ENCODE measurements at regions of chr1 and their contacts with region 1.

Region 1: DNA sequence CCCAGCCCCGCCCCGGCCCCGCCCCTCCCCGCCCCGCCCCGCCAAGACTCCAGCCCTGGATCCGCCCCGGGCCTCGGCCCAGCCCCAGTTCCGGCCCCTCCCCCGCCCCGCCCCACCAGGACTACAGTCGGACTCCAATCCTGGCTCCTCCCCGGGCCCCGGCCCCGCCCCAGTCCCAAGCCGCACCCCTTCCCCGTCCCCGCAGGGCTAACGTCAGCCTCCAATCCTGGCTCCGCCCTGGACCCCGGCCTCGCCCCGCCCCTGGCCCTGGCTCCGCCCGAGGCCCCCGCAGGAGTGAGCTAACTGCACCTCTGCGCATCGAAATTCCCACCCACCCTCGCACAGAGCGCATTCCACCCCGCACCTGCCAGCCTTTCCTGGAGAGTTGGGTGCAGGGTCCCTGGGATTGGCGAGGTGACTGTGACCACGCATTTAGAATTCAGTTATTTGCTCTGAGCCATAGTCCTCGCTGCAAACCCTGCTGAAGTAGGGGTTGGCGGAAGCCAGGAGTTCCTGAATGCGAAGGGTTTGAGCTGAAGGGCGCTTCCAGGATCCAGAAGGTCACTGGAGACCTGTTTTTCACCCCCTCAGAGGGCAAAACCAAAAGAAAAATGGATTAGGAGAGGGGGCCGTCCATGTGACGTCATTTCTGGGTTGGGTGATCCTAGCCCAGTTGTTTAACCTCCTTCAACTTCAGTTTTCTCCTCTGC is 588 bp upstream of the IGSF8 start:
- DNase-seq: peak; percentile 100
- CTCF ChIP-seq: no peak

Region 2: DNA sequence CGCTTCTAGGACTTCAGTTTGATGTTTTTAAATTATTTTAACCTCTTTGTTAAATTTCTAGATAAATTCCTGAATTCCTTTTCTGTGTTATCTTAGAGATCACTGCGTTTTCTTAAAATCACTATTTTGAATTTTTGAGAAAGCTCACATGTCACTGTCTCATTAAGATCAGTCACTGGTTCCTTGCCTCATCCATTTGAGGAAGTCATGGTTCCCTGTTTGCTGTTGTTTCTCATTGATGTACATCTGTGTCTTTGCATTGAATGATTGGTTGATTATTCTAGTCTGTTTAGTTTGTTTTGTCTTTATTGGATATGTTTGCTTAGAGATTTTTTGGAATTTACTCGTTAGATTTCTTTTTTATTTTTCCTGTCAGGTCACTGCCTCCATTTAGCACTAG is 434.8 kb before region 1 on chr1:
- CTCF ChIA-PET with region 1: no interaction called
- POLR2A ChIA-PET with region 1: no interaction called
- DNase-seq: no peak
- CTCF ChIP-seq: no peak

Region 3: DNA sequence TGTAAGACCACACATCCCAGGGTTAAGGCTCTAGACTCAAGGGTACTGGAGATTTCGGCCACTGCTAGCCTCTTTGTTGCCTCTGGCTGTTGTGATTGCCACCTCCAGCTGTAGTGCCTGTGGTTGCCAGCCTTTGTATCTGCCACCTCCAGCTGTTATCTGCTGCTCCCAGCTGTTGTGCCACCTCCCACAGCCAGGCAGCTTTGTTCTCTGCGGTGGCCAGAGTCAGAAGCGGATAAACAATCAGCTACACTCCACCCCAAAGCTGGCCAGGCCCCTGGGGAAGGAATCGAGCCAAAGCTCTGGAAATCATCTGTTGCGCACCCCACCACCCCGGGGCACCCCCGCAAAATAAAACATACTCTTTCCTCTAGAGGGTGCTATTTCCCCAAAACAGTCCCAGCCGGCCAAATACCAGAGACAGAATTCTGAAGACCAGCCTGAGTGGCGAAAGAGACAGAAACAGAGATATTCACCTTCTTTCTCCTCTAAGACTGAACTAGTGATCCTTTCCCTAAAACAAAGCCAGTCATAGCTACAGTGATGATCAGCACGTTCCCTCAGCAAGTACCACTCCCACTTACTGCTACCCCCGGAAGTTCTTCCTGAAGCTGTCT is 52.4 kb before region 1 on chr1:
- CTCF ChIA-PET with region 1: interaction called, 983 read pairs
- POLR2A ChIA-PET with region 1: no interaction called
- DNase-seq: peak; percentile 82
- CTCF ChIP-seq: peak; percentile 67

Region 4: GRCh38 chr1:160078512-160079195 is 20.4 kb before region 1 on chr1:
- CTCF ChIA-PET with region 1: interaction called, 983 read pairs
- POLR2A ChIA-PET with region 1: no interaction called
- DNase-seq: peak; percentile 71
- CTCF ChIP-seq: peak; percentile 77

Region 5: DNA sequence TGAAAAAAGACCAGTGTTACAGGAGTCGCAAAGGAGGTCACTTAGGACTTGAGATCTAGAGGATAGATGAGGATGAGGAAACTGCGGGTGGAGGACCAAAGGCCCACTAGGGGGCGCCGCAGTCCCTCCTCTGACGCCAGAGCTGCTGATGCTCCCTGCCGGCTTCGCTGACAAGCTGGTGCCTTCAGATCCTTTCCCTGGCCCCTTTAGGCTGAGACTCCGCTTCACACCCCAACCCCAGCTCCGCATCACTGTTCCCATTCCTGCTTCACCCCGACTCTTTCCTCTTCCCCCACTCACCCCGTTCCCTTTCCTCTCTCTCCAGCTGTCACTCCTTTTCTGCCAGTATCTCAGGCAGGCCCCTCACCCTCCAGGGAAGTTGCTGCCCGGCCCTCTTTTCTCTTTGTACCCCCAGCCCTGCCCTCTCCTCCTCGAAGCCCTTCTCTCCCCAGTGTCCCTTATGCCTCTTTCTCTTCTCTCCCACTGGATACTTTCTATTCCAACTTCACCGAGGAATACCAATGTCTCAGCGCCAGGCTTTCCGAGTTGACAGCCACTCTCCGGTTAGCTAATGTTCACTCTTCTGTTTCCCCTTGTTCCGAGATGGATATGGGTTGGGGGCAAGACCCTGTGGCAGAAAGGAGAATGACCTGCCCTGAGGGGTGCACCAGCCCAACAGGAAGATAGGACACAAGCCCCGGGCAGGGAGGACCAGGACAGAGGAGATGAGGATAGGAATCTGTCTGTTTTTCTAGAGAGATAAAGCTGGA is 13.1 kb before region 1 on chr1:
- CTCF ChIA-PET with region 1: interaction called, 983 read pairs
- POLR2A ChIA-PET with region 1: no interaction called
- DNase-seq: peak; percentile 89
- CTCF ChIP-seq: peak; percentile 71

Region 6: DNA sequence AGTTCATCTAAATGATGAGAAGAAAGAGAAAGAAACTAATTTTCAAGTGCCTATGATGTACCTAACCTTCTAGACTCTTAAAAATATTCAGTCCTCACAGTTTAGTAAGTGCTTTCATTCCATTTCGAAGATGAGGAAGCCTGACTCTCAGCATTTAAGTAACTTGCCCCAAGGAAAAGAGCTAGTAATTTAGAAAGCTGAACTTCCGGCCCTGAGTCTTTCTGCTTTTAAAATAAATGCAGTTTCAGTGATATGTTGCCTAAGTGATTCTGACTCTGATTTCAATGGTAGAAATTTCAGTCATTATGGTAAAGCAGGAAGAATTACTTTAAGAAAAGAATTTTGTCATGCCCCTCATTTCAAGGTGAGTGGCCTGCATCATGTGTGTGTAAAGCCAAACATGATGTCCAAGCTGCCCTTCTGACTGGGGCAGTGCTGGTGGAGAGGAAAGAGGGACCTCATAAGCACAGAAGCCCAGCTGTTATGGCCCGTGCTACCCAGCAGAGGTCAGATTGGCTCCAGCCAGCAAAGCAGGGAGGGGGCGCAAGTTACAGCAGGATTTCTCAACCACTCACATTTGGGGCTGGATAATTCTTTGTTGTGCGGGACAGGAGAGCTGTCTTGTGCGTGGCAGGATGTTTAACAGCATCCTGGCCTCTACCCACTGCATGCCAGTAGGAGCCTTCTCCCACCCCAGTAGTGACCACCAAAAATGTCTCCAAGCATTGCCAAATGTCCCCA is 63.1 kb after region 1 on chr1:
- CTCF ChIA-PET with region 1: interaction called, 10 read pairs
- POLR2A ChIA-PET with region 1: no interaction called
- DNase-seq: peak; percentile 41
- CTCF ChIP-seq: peak; percentile 46

Region 7: DNA sequence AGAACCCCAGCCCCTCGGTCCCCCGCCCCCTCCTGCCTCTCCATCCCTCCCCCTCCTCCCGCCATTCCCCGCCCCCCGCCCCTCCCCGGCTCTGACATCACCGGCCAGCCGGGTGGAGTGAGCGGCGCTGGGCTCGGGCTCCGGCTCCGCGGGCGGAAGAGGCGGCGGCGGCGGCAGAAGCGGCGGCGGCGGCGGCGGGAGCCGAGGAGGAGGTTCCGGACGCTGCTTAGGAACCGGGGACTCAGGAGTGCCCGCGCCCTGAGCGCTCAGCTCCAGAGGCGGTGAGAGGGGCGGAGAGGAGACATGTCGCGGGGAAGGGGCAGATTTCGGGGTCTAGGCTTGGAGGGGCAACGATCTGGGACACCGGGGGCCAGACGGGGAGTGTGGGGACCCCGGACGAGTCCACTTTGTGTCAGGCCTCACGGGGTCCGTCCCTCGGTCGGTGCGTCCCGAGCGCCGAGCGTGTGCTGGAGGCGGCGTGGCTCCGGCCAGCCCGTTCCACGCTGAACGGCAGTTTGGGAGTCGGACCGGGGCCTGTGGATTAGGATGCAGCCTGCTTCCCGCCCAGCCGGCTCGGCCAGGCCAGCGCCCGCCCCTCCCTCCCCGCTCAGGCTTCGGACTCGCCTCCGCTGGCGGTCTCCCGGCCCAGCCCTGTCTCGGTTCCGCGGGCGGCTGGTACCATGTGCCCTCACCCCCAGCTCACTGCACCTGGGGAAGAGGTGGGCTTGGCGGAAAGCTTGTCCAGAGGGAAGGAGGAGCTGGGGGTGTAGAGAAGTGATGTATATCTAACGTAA is 106.4 kb after region 1 on chr1 and contains the start of gene PEA15:
- CTCF ChIA-PET with region 1: interaction called, 17 read pairs
- POLR2A ChIA-PET with region 1: no interaction called
- DNase-seq: peak; percentile 89
- CTCF ChIP-seq: no peak

Region 8: DNA sequence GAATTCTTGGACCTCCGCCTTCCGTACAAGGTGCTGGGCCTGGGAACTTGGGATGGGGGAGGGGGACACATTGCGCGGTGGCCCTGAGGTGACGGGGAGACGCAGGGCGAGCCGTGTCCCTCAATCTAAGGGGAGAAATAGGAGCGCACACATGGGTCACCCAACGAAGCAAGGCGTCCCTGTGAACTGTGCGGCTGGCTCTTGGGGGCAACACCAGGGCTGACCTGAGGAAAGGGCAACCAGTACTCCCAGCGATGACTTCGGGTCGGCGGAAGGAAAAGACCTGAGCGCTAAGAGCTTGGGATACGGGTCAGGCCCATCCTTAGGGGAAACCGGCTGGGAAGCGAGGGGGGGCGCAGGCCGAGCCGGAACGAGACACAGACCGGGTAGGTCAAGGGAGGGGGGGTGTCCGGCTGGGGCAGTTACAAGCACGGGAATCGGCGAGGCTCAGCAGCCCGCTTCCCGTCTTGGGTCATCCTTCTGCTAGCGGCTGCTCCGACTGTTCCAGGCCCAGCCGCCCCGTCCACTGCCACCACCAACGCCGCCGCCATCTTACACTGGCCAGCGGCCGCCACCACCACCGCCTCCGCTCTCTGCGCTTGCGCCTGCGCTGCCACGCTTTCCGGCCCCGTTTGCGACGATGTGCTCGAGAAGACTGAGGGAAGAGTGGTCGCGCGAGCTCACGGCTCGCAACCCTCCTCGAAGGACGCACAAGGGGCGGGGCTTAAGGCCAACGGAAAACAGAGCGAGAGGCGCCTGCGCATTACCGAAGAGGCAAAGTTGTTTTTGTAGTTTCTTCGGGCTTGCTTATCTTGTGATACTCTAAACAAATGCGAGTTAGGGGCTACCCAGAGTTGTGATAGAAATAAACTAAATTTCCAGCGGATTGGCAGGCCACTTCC is 163.1 kb after region 1 on chr1 and contains the start of gene DCAF8:
- CTCF ChIA-PET with region 1: interaction called, 10 read pairs
- POLR2A ChIA-PET with region 1: no interaction called
- DNase-seq: peak; percentile 95
- CTCF ChIP-seq: no peak

Measured in GM10248 (cell line).